HEK293 (cell line): ENCODE measurements at regions of chr15 and their contacts with region 1.

Region 1: GRCh38 chr15:70815644-70816043 is 38.3 kb downstream of the LARP6 start:
- H3K4me3 ChIP-seq: no peak overlapping the region
- H3K27ac ChIP-seq: no peak overlapping the region
- H3K4me1 ChIP-seq: no peaks in the 10 kb centered on the region
- CTCF ChIP-seq: no peak

Region 2: DNA sequence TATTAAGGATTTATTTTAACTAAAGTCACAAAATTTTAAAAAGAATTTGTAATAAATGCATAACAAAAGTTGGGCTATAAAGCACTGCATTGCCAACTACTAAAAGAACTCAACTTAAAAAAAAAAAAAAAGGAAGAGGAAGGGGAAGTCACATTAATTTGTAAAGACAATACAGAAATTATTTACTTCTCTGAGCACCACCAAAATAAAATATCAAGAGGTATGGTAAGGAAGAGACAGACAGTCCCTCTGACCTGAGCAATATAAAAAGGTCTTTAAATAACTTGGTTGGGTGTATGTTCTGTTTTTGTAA is 135.8 kb before region 1 on chr15:
- CTCF ChIA-PET with region 1: interaction called, 71 read pairs
- POLR2A ChIA-PET with region 1: no interaction called
- H3K4me3 ChIP-seq: no peak overlapping the region
- H3K27ac ChIP-seq: no peak overlapping the region
- H3K4me1 ChIP-seq: no peaks in the 10 kb centered on the region
- CTCF ChIP-seq: no peak

Region 3: GRCh38 chr15:70722266-70723121 is 93.2 kb before region 1 on chr15:
- CTCF ChIA-PET with region 1: interaction called, 41 read pairs
- POLR2A ChIA-PET with region 1: no interaction called
- H3K4me3 ChIP-seq: no peak overlapping the region
- H3K27ac ChIP-seq: no peak overlapping the region
- H3K4me1 ChIP-seq: no peaks in the 10 kb centered on the region
- CTCF ChIP-seq: peak; percentile 30; the same call in 1 of the 2 replicates

Region 4: GRCh38 chr15:70754862-70755261 is 60.8 kb before region 1 on chr15:
- CTCF ChIA-PET with region 1: interaction called, 24 read pairs
- POLR2A ChIA-PET with region 1: no interaction called
- H3K4me3 ChIP-seq: no peak overlapping the region
- H3K27ac ChIP-seq: no peak overlapping the region
- H3K4me1 ChIP-seq: peaks cover 32% of the 10 kb centered on the region
- CTCF ChIP-seq: no peak

Region 5: DNA sequence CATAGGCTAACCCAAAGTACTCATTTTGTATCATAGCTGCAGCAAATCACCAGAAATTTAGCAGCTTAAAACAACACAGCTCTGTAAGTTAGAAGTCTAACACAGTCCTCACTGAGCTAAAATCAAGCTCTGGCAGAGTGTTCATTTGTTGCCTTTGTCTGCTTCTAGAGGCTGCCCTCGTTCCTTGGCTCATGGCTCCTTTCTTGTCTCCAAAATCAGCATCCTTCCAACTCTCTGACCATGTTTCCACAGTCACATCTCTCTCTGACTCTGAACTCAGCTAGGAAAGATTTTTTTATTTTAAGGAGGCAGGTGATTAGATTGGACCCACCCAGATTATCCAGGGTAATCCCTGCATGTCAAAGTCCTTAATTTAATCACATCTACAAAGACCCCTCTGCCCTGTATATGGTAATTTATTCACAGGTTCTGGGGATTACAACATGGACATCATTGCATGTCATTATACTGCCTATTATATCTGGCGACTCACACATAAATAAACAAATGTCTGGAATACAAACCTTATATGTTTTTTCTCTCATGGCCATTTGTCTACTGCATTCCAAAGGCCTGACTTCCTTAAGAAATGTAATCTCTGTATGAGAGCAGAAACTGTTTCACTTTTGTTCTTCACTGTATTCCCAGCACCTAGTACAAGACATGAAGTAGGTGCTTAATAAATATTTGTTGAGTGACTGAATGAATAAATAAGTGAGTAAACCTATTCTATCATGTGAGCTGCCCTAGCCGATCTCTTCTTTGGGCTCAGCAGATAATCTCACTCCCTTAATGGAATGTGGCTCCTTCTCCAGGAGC is 37.2 kb before region 1 on chr15:
- CTCF ChIA-PET with region 1: interaction called, 19 read pairs
- POLR2A ChIA-PET with region 1: no interaction called
- H3K4me3 ChIP-seq: no peak overlapping the region
- H3K27ac ChIP-seq: no peak overlapping the region
- H3K4me1 ChIP-seq: peaks cover 4% of the 10 kb centered on the region
- CTCF ChIP-seq: no peak

Region 6: GRCh38 chr15:70799667-70800450 is 15.8 kb before region 1 on chr15:
- CTCF ChIA-PET with region 1: interaction called, 47 read pairs
- POLR2A ChIA-PET with region 1: interaction called, 5 read pairs
- H3K4me3 ChIP-seq: no peak overlapping the region
- H3K27ac ChIP-seq: no peak overlapping the region
- H3K4me1 ChIP-seq: peaks cover 4% of the 10 kb centered on the region; the same call in 1 of the 2 replicates
- CTCF ChIP-seq: no peak

Region 7: GRCh38 chr15:71066983-71067382 is 251.3 kb after region 1 on chr15:
- CTCF ChIA-PET with region 1: no interaction called
- POLR2A ChIA-PET with region 1: no interaction called
- H3K4me3 ChIP-seq: no peak overlapping the region
- H3K27ac ChIP-seq: no peak overlapping the region
- H3K4me1 ChIP-seq: no peaks in the 10 kb centered on the region
- CTCF ChIP-seq: no peak

Region 8: DNA sequence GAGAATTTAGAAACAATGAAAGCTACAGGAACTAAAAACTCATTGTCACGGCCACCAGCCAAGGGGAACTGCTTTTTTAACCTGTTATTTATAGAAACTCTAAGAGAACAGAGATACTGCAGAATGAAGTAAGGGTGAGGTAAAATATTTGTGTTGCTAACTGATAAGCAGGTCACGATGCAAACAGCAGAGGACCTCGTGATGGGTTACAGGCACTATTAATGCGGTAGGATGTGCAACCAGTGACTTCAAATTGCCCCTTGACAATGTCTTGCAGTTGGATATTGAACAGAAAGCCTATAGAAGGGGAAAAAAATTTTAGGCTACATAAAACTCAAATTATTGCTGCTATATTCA is 352.8 kb after region 1 on chr15:
- CTCF ChIA-PET with region 1: no interaction called
- POLR2A ChIA-PET with region 1: no interaction called
- H3K4me3 ChIP-seq: no peak overlapping the region
- H3K27ac ChIP-seq: no peak overlapping the region
- H3K4me1 ChIP-seq: peaks cover 3% of the 10 kb centered on the region; the same call in 1 of the 2 replicates
- CTCF ChIP-seq: no peak